ENCODE measurements at regions of chr15 and their contacts with region 1.

Region 1: GRCh38 chr15:63683343-63683951 is 86.3 kb downstream of the FBXL22 start:
- DNase-seq: no peak
- H3K4me3 ChIP-seq: no peak overlapping the region
- H3K27me3 ChIP-seq: no peaks in the 10 kb centered on the region
- CTCF ChIP-seq: no peak

Region 2: GRCh38 chr15:63694184-63694583 is 10.7 kb after region 1 on chr15:
- CTCF ChIA-PET with region 1: no interaction called
- POLR2A ChIA-PET with region 1: interaction called, 12 read pairs
- DNase-seq: no peak
- H3K4me3 ChIP-seq: no peak overlapping the region
- H3K27me3 ChIP-seq: no peaks in the 10 kb centered on the region
- CTCF ChIP-seq: no peak

Region 3: GRCh38 chr15:63718590-63719035 is 35.2 kb after region 1 on chr15:
- CTCF ChIA-PET with region 1: no interaction called
- POLR2A ChIA-PET with region 1: no interaction called
- DNase-seq: peak; percentile 55
- H3K4me3 ChIP-seq: no peak overlapping the region
- H3K27me3 ChIP-seq: no peaks in the 10 kb centered on the region
- CTCF ChIP-seq: no peak

Region 4: GRCh38 chr15:63759752-63760151 is 76.3 kb after region 1 on chr15:
- CTCF ChIA-PET with region 1: no interaction called
- POLR2A ChIA-PET with region 1: no interaction called
- DNase-seq: no peak
- H3K4me3 ChIP-seq: no peak overlapping the region
- H3K27me3 ChIP-seq: no peaks in the 10 kb centered on the region
- CTCF ChIP-seq: no peak

Region 5: DNA sequence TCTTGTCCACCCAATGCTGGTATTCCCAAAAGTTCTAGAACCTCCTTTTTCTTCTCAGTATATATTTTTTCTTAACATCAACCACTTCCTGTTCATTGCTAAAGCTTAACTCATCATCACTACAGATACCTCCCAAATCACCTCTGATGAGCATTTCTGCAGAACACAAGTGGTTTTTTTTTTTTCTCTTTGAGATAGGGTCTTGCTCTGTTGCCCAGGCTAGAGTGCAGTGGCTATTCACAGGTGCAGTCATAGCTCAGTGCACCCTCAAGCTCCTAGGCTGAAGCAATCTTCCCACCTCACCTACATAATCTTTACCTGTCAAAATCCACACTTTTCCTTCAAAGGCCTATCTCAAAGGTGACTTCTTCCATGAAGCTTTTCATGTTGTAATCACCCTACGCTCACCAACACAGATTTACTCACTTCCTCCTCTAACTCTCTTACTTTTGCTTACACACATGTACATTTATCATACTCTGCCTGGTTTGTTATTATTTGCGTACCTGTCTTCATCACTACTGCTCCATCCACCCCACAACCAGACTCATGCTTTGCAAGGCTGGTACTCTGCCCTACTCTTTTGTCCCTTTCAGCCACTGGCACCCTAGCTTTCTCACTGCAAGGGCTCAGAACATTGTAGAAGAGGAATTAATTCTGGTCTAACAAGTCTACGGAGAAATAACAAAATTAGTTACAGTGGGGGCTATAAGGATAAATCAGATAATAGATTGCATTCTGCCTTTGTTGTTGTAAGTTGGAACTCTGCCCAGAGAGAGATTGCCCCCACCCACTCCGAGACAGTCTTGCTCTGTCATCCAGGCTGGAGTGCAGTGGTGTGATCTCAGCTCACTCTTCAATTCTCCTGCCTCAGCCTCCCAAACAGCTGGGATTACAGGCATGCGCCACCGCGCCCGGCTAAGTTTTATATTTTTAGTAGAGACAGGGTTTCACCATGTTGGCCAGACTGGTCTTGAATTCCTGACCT is 122.8 kb after region 1 on chr15:
- CTCF ChIA-PET with region 1: no interaction called
- POLR2A ChIA-PET with region 1: no interaction called
- DNase-seq: no peak
- H3K4me3 ChIP-seq: no peak overlapping the region
- H3K27me3 ChIP-seq: no peaks in the 10 kb centered on the region
- CTCF ChIP-seq: no peak

Measured in BJ (cell line).